ENCODE measurements at regions of chr7 and their contacts with region 1.

Region 1: GRCh38 chr7:106139265-106140251 is 27.4 kb upstream of the SYPL1 start:
- DNase-seq: peak; percentile 24
- H3K4me3 ChIP-seq: no peak overlapping the region
- H3K27ac ChIP-seq: peak overlapping the region; percentile 62 to 84 (median 74)
- H3K4me1 ChIP-seq: peaks cover 0 to 19% (median 8%) of the 10 kb centered on the region in 4 donors
- H3K27me3 ChIP-seq: no peaks in the 10 kb centered on the region
- CTCF ChIP-seq: no peak
- EP300 ChIP-seq: peak; percentile 64
- POLR2A ChIP-seq: no peak

Region 2: DNA sequence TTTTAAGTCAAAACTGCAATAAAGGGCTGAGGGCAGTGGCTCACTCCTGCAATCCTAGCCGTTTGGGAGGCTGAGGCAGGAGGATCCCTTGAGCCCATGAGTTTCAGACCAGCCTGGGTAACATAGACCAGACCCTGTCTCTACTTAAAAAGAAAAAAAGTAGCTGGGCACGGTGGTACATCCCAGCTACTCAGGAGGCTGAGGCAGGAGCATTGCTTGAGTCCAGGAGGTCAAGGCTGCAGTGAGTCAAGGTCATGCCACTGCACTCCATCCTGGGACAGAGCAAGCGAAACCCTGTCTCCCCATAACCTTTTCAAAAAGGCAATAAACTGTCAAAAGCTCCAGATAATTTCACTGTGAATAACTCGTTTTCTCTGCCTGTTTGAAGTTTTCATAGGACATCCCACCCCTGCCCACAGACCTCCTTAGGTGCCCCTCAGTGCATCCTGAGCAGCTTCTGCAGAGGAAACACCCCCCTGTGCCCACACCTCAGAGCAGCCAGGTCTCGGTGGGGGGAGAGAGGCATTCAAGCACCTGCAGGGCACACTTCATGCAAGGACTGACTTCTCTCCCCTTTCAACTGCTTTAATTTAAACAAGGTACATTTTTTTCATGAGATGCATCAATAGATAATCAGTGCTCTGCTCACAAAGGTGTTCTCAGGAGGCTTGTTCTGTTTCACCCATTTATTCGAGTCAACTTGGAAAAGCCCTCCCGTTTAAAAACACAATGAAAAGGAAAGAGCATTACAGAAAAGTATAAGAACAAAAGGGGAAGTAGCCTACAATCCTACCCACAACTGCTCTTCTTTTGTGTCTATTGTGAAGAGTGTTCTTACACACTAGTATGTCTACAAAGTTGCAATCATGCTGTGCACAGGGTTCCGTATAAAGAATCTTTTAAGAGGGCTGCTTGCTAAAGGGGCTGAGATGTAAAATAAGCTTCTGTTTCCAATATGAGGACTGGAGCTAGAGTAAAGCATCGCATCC is 1020.7 kb before region 1 on chr7:
- in situ Hi-C with region 1: no loop called
- intact Hi-C with region 1: no loop called
- DNase-seq: no peak
- H3K4me3 ChIP-seq: no peak overlapping the region
- H3K27ac ChIP-seq: no peak overlapping the region
- H3K4me1 ChIP-seq: no peaks in the 10 kb centered on the region
- H3K27me3 ChIP-seq: no peaks in the 10 kb centered on the region
- CTCF ChIP-seq: no peak
- EP300 ChIP-seq: no peak
- POLR2A ChIP-seq: no peak

Region 3: GRCh38 chr7:105748701-105749100 is 390.9 kb before region 1 on chr7:
- in situ Hi-C with region 1: no loop called
- intact Hi-C with region 1: no loop called
- DNase-seq: no peak
- H3K4me3 ChIP-seq: no peak overlapping the region
- H3K27ac ChIP-seq: no peak overlapping the region
- H3K4me1 ChIP-seq: no peaks in the 10 kb centered on the region
- H3K27me3 ChIP-seq: no peaks in the 10 kb centered on the region
- CTCF ChIP-seq: no peak
- EP300 ChIP-seq: no peak
- POLR2A ChIP-seq: no peak

Region 4: GRCh38 chr7:106064771-106065585 is 74.6 kb before region 1 on chr7:
- in situ Hi-C with region 1: no loop called
- intact Hi-C with region 1: loop called (anchors 5 kb)
- DNase-seq: peak; percentile 79
- H3K4me3 ChIP-seq: peak overlapping the region in 3 of 4 donors; percentile 14 to 38 (median 14)
- H3K27ac ChIP-seq: peak overlapping the region; percentile 82 to 93 (median 88)
- H3K4me1 ChIP-seq: peaks cover 32 to 59% (median 44%) of the 10 kb centered on the region in 4 donors
- H3K27me3 ChIP-seq: no peaks in the 10 kb centered on the region
- CTCF ChIP-seq: no peak
- EP300 ChIP-seq: no peak
- POLR2A ChIP-seq: peak; percentile 4

Region 5: GRCh38 chr7:106273009-106273668 is 133.6 kb after region 1 on chr7:
- in situ Hi-C with region 1: no loop called
- intact Hi-C with region 1: no loop called
- DNase-seq: no peak
- H3K4me3 ChIP-seq: no peak overlapping the region
- H3K27ac ChIP-seq: no peak overlapping the region
- H3K4me1 ChIP-seq: peaks cover 0 to 2% (median 0%) of the 10 kb centered on the region in 4 donors
- H3K27me3 ChIP-seq: no peaks in the 10 kb centered on the region
- CTCF ChIP-seq: no peak
- EP300 ChIP-seq: no peak
- POLR2A ChIP-seq: no peak

Measured in transverse colon (tissue), 4 donors.